ENCODE measurements at regions of chr3 and their contacts with region 1.

Region 1: GRCh38 chr3:39406368-39407258 is at the start of gene RPSA:
- DNase-seq: peak; percentile 86 to 98
- ATAC-seq: peak; percentile 87 to 96 (median 91)
- H3K4me3 ChIP-seq: peak within 1 kb of the TSS; percentile 55
- H3K4me3 Mint-ChIP-seq: peak within 1 kb of the TSS; percentile 96
- H3K27ac ChIP-seq: peak within 1 kb of the TSS; percentile 71
- H3K27ac Mint-ChIP-seq: peak within 1 kb of the TSS; percentile 96 to 98
- H3K4me1 ChIP-seq: peaks cover 19% of the 10 kb centered on the region
- H3K4me1 Mint-ChIP-seq: peaks cover 40 to 43% of the 10 kb centered on the region in 2 donors
- H3K27me3 ChIP-seq: no peaks in the 10 kb centered on the region
- H3K27me3 Mint-ChIP-seq: no peaks in the 10 kb centered on the region
- CTCF ChIP-seq: peak; percentile 38
- total RNA-seq, gene RPSA: 737 to 921 (median 821) TPM

Region 2: DNA sequence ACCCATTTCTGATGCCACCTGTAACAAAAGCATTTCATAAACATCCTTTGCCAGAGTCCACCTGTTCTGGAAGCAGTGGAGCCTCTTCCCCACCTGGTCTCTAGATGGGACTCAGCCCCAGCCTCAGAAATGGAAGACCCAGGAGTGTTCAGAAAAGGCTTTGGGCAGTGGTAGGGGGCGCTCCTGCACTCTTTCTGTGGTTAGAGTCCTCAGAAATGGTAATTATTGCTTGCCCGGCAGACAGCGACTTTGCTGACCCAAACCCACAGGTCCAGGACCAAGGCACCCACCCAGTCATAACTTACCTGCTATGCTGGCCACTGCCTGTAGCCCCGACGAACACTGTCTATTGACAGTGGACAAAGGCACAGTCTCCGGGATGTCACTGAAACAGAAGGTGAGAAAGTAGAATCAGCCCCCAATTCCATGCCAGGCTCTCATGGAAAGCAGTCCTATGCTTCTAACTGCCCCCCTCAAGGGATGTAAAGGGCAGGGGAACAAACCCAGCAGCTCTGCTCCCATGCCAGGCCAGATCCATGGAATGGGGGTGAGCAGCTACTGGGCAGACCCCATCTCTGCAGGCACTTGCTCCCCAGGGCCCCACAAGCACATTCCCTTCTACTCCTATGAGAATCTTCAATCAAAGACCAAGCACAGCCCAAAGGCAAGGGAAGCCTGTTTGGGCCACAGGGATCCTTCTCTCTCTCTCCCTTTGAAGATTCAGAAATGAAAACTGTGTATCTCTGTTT is 1274.8 kb before region 1 on chr3:
- intact Hi-C with region 1: no loop called
- DNase-seq: peak in 1 of 2 donors; percentile 46
- ATAC-seq: no peak
- H3K4me3 ChIP-seq: no peak overlapping the region
- H3K4me3 Mint-ChIP-seq: no peak overlapping the region
- H3K27ac ChIP-seq: no peak overlapping the region
- H3K27ac Mint-ChIP-seq: peak overlapping the region in 1 of 2 donors; percentile 27
- H3K4me1 ChIP-seq: peaks cover 16% of the 10 kb centered on the region
- H3K4me1 Mint-ChIP-seq: peaks cover 32 to 39% of the 10 kb centered on the region in 2 donors
- H3K27me3 ChIP-seq: no peaks in the 10 kb centered on the region
- H3K27me3 Mint-ChIP-seq: no peaks in the 10 kb centered on the region
- CTCF ChIP-seq: no peak

Region 3: DNA sequence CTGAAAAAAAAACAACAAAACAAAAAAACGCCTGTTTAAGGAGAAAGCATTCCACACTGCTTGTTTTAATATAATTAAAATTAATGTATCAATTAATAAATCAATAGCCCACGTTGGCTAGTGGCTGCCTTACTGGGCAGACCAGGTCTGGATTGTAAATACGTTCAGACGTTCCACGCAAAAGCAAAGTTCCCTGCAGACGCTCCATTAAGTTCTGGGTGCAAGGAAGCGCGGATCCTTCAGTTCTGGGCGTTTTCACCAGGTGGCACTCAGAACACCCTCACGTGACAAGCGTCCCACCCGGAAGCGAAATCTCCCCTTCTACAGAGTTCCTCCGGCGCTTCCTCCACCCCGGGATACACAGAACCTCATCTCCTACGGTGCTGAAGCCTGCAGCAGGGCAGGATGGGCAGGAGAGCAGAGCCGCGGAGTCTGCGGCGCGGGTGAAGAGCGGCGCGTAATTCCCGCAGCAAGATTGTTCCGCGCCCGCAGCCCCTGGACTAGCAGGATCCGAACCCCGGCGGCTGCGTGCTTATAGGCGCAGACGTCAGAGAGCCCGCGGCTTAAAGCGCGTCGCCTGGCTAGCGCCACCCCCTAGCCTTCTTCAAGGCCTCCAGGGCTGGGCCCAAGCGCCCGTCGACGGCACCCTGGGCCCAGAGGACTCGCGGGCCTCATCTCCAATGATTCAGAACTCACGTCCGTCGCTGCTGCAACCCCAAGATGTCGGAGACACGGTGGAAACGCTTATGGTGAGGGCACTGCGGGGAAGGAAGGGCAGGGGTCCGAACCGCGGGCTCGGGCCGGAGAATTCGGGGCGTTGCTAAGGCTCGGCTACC is 23.4 kb before region 1 on chr3 and contains the start of gene SLC25A38:
- intact Hi-C with region 1: loop called (anchors 1 kb)
- DNase-seq: peak; percentile 74 to 92
- ATAC-seq: peak; percentile 76 to 89 (median 79)
- H3K4me3 ChIP-seq: peak within 1 kb of the TSS; percentile 94
- H3K4me3 Mint-ChIP-seq: peak within 1 kb of the TSS; percentile 98
- H3K27ac ChIP-seq: peak within 1 kb of the TSS; percentile 97
- H3K27ac Mint-ChIP-seq: peak within 1 kb of the TSS; percentile 99
- H3K4me1 ChIP-seq: peaks cover 49% of the 10 kb centered on the region
- H3K4me1 Mint-ChIP-seq: peaks cover 41 to 45% of the 10 kb centered on the region in 2 donors
- H3K27me3 ChIP-seq: no peaks in the 10 kb centered on the region
- H3K27me3 Mint-ChIP-seq: no peaks in the 10 kb centered on the region
- CTCF ChIP-seq: no peak
- total RNA-seq, gene SLC25A38: 40.0 to 44.7 (median 41.7) TPM